Right cardiac atrium (tissue), 5 donors: ENCODE measurements at regions of chr6 and their contacts with region 1.

Region 1: DNA sequence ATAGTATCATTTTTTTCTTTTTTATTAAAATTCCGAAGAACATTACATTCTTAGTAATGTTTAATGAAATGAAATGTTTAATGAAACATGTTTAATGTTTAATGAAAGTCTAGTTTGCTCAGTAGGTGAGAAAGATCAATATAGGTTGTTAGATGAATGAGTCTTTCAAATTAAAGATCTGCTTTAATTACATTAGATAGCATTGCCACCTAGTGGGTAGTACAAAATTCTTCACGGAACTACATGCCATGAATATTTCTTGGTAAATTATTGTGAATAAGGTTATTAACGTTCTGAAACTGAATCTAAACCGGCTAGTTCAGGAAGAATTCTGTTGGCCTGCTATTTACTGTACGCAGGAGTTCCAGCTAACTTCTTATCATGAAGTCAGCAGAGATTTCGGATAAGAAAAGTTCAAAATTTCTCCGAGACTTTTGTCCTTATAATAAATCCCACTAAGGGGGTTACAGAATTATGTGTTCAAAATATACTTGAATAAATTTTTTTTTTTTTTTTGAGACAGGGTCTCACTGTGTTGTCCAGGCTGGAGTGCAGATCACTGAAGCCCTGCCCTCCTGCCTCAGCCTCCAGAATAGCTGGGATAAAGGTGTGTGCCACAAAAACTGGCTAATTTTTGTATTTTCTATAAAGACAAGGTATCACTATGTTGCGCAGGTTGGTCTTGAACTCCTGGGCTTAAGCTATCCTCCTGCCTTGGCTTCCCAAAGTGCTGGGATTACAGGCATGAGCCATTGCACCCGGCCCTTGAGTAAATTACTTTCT is 7.9 kb upstream of the GMNN start:
- DNase-seq: no peak
- ATAC-seq: peak; percentile 51 to 52
- H3K4me3 ChIP-seq: no peak overlapping the region
- H3K27ac ChIP-seq: no peak overlapping the region
- H3K4me1 ChIP-seq: no peaks in the 10 kb centered on the region
- H3K27me3 ChIP-seq: no peaks in the 10 kb centered on the region

Region 2: GRCh38 chr6:24574809-24575208 is 192.1 kb before region 1 on chr6:
- intact Hi-C with region 1: loop called in 3 of 4 experiments (anchors 5 kb)
- DNase-seq: no peak
- ATAC-seq: no peak
- H3K4me3 ChIP-seq: no peak overlapping the region
- H3K27ac ChIP-seq: no peak overlapping the region
- H3K4me1 ChIP-seq: no peaks in the 10 kb centered on the region
- H3K27me3 ChIP-seq: no peaks in the 10 kb centered on the region